CD8-positive, alpha-beta memory T cell (primary cell): ENCODE measurements at regions of chr10 and their contacts with region 1.

Region 1: DNA sequence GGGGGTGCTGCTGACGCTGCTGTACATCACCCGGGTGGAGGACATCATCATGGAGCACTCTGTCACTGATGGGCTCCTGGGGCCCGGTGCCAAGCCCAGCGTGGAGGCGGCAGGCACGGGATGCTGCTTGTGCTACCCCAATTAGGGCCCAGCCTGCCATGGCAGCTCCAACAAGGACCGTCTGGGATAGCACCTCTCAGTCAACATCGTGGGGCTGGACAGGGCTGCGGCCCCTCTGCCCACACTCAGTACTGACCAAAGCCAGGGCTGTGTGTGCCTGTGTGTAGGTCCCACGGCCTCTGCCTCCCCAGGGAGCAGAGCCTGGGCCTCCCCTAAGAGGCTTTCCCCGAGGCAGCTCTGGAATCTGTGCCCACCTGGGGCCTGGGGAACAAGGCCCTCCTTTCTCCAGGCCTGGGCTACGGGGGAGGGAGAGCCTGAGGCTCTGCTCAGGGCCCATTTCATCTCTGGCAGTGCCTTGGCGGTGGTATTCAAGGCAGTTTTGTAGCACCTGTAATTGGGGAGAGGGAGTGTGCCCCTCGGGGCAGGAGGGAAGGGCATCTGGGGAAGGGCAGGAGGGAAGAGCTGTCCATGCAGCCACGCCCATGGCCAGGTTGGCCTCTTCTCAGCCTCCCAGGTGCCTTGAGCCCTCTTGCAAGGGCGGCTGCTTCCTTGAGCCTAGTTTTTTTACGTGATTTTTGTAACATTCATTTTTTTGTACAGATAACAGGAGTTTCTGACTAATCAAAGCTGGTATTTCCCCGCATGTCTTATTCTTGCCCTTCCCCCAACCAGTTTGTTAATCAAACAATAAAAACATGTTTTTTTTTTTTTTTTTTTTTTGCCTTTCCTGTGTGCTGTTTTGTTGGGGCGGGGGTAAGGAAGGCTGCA is 55.8 kb downstream of the TSPAN15 start:
- DNase-seq: no peak
- H3K4me3 ChIP-seq: peak overlapping the region; percentile 57
- H3K4me3 Mint-ChIP-seq: peak overlapping the region; percentile 0 to 82 (median 74)
- H3K27ac ChIP-seq: no peak overlapping the region
- H3K27ac Mint-ChIP-seq: peak overlapping the region; percentile 24 to 97 (median 83)
- H3K4me1 ChIP-seq: peaks cover 12% of the 10 kb centered on the region
- H3K4me1 Mint-ChIP-seq: peaks cover 9 to 12% (median 11%) of the 10 kb centered on the region in 3 donors
- H3K27me3 ChIP-seq: no peaks in the 10 kb centered on the region
- H3K27me3 Mint-ChIP-seq: peaks cover 0 to 2% of the 10 kb centered on the region in 2 donors

Region 2: DNA sequence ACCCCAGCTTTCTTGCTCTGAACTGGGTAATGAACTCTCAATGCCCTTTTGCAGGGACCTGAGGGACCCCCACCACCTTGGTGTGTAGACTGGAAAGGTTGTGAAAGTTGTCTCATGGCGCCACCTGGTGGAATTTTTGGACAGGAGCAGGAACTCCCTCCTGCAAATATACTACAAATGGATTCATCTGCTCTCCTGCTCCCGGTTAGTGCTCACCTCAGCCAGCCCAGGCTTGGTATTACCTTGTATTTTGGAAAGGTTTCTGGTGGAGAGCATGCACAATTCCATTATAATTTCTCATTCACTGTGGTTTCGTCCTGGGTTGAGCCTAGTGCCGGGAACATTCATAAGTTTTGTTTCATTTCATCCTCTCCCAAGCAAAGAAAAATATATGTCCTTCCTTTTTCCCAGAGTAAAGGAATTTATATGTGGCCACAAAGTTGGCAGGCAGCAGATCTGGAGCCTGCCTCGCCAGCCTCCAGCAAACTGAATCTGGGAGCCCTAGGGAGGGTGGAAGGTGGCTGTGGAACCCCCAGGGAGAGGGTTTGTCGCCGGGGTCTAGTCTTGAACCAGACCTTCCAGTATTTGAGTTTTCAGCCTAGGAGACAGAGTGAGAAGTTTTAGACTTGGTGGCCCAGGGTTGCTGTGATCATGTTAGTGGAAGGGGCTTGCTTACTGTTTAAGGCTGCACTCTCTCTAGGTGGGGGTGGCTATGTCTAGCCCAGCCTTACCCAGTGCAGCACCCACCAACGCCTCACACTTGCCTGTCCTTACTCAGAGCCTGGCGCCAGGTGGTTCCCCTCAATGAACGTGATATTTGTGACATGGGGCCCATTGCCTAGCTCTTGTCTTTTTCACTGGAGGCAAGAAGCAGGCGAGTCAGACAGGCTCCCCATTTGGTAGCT is 132.5 kb after region 1 on chr10:
- CTCF ChIA-PET with region 1: interaction called, 12 read pairs
- POLR2A ChIA-PET with region 1: no interaction called
- DNase-seq: peak; percentile 54 to 75 (median 58)
- H3K4me3 ChIP-seq: no peak overlapping the region
- H3K4me3 Mint-ChIP-seq: no peak overlapping the region
- H3K27ac ChIP-seq: no peak overlapping the region
- H3K27ac Mint-ChIP-seq: peak overlapping the region in 1 of 8 donors; percentile 58
- H3K4me1 ChIP-seq: no peaks in the 10 kb centered on the region
- H3K4me1 Mint-ChIP-seq: peaks cover 0 to 3% (median 0%) of the 10 kb centered on the region in 3 donors
- H3K27me3 ChIP-seq: no peaks in the 10 kb centered on the region
- H3K27me3 Mint-ChIP-seq: peaks cover 3 to 4% of the 10 kb centered on the region in 2 donors